Right ventricle myocardium superior (tissue), 1 donor: ENCODE measurements at regions of chr19 and their contacts with region 1.

Region 1: GRCh38 chr19:51473009-51473707 is 5.2 kb upstream of the CEACAM18 start:
- DNase-seq: peak; percentile 74
- ATAC-seq: peak; percentile 79

Region 2: GRCh38 chr19:51354742-51355148 is 118.4 kb before region 1 on chr19:
- intact Hi-C with region 1: no loop called
- DNase-seq: no peak
- ATAC-seq: no peak

Region 3: GRCh38 chr19:51784922-51785690 is 311.9 kb after region 1 on chr19:
- intact Hi-C with region 1: loop called (anchors 10 kb)
- DNase-seq: peak; percentile 74
- ATAC-seq: peak; percentile 79